ENCODE measurements at regions of chr9 and their contacts with region 1.

Region 1: GRCh38 chr9:118744801-118745200 is 624.4 kb downstream of the BRINP1 start:
- DNase-seq: no peak
- H3K4me3 ChIP-seq: no peak overlapping the region
- H3K27ac ChIP-seq: no peak overlapping the region
- H3K4me1 ChIP-seq: no peaks in the 10 kb centered on the region
- H3K27me3 ChIP-seq: no peaks in the 10 kb centered on the region
- CTCF ChIP-seq: no peak
- EP300 ChIP-seq: no peak
- POLR2A ChIP-seq: no peak

Region 2: DNA sequence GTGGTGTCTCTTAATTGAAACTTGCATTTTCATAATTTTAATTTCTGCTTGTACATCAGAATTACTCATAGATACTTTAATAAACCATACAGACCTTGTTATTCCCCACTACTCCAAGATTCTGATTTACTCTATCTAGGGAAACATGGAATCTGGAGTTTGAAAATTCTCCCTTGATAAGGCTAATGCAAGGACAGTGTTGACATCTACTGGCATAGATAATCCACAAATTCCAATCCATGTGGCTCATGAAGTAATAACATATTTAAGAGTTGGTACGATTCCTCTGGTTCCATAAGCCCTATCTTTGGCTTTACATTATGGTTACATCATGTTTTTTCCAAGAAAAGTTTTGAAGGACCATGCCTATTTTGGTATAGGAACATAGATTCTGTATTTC is 281.4 kb before region 1 on chr9:
- in situ Hi-C with region 1: no loop called
- intact Hi-C with region 1: no loop called
- DNase-seq: no peak
- H3K4me3 ChIP-seq: no peak overlapping the region
- H3K27ac ChIP-seq: no peak overlapping the region
- H3K4me1 ChIP-seq: peaks cover 0 to 9% (median 0%) of the 10 kb centered on the region in 4 donors
- H3K27me3 ChIP-seq: no peaks in the 10 kb centered on the region
- CTCF ChIP-seq: no peak
- EP300 ChIP-seq: no peak
- POLR2A ChIP-seq: no peak

Region 3: DNA sequence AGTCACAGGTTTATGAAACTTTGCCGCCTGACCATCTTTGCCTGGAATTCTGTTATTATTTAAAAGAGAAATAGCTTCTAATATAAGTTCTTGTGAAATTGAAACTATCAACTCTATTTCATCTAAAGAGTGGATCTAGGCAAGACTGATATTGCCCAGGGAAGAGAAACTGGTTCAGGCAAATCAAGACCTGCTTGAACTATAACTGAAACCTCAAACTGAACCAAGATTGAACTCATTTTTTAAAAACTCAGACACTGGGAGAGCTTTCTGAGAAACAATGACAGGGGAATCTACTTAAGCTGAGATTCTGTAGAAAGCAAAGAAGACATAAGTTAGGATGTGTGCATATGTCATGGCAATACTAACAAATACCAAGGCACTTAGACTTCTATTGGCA is 191.3 kb before region 1 on chr9:
- in situ Hi-C with region 1: no loop called
- intact Hi-C with region 1: no loop called
- DNase-seq: no peak
- H3K4me3 ChIP-seq: no peak overlapping the region
- H3K27ac ChIP-seq: no peak overlapping the region
- H3K4me1 ChIP-seq: no peaks in the 10 kb centered on the region
- H3K27me3 ChIP-seq: no peaks in the 10 kb centered on the region
- CTCF ChIP-seq: no peak
- EP300 ChIP-seq: no peak
- POLR2A ChIP-seq: no peak

Region 4: GRCh38 chr9:118586978-118587377 is 157.8 kb before region 1 on chr9:
- in situ Hi-C with region 1: no loop called
- intact Hi-C with region 1: loop called (anchors 5 kb)
- DNase-seq: no peak
- H3K4me3 ChIP-seq: no peak overlapping the region
- H3K27ac ChIP-seq: no peak overlapping the region
- H3K4me1 ChIP-seq: no peaks in the 10 kb centered on the region
- H3K27me3 ChIP-seq: no peaks in the 10 kb centered on the region
- CTCF ChIP-seq: no peak
- EP300 ChIP-seq: no peak
- POLR2A ChIP-seq: no peak

Region 5: GRCh38 chr9:119114681-119115080 is 369.9 kb after region 1 on chr9:
- in situ Hi-C with region 1: no loop called
- intact Hi-C with region 1: loop called (anchors 5 kb)
- DNase-seq: no peak
- H3K4me3 ChIP-seq: no peak overlapping the region
- H3K27ac ChIP-seq: no peak overlapping the region
- H3K4me1 ChIP-seq: no peaks in the 10 kb centered on the region
- H3K27me3 ChIP-seq: no peaks in the 10 kb centered on the region
- CTCF ChIP-seq: no peak
- EP300 ChIP-seq: no peak
- POLR2A ChIP-seq: no peak

Region 6: DNA sequence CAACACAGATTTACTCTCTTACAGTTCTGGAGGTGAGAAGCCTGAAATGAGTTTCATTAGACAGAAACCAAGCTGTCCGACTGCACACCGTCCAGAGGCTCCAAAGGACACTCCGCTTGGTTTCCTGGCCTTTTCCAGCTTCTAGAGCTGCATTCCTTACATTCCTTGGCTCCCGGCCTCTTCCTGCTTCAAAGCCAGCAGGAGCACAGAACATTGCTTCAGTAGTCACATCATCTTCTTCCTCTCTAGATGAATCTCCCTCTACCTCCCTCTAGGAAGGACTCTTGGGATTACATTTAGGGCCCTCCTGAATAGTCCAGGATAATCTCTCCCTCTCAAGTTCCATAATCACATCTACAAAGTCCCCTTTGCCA is 1621.8 kb after region 1 on chr9:
- in situ Hi-C with region 1: no loop called
- intact Hi-C with region 1: no loop called
- DNase-seq: no peak
- H3K4me3 ChIP-seq: no peak overlapping the region
- H3K27ac ChIP-seq: no peak overlapping the region
- H3K4me1 ChIP-seq: no peaks in the 10 kb centered on the region
- H3K27me3 ChIP-seq: no peaks in the 10 kb centered on the region
- CTCF ChIP-seq: no peak
- EP300 ChIP-seq: no peak
- POLR2A ChIP-seq: no peak

Measured in transverse colon (tissue), 4 donors.